ENCODE measurements at regions of chr14 and their contacts with region 1.

Region 1: GRCh38 chr14:102096214-102097114 is 9.6 kb upstream of the HSP90AA1 start:
- DNase-seq: peak; percentile 86
- H3K4me3 Mint-ChIP-seq: no peak overlapping the region
- H3K27ac Mint-ChIP-seq: peak overlapping the region; percentile 6
- H3K4me1 Mint-ChIP-seq: peaks cover 33% of the 10 kb centered on the region
- H3K27me3 Mint-ChIP-seq: no peaks in the 10 kb centered on the region
- CTCF ChIP-seq: peak; percentile 76

Region 2: GRCh38 chr14:101964297-101965144 is 131.9 kb before region 1 on chr14 and contains the start of gene DYNC1H1:
- CTCF ChIA-PET with region 1: no interaction called
- intact Hi-C with region 1: loop called (anchors 2 kb)
- DNase-seq: peak; percentile 93
- H3K4me3 Mint-ChIP-seq: peak within 1 kb of the TSS; percentile 87
- H3K27ac Mint-ChIP-seq: peak within 1 kb of the TSS; percentile 61
- H3K4me1 Mint-ChIP-seq: peaks cover 47% of the 10 kb centered on the region
- H3K27me3 Mint-ChIP-seq: no peaks in the 10 kb centered on the region
- CTCF ChIP-seq: no peak
- total RNA-seq, gene DYNC1H1: 510 and 529 TPM in 2 replicates

Region 3: DNA sequence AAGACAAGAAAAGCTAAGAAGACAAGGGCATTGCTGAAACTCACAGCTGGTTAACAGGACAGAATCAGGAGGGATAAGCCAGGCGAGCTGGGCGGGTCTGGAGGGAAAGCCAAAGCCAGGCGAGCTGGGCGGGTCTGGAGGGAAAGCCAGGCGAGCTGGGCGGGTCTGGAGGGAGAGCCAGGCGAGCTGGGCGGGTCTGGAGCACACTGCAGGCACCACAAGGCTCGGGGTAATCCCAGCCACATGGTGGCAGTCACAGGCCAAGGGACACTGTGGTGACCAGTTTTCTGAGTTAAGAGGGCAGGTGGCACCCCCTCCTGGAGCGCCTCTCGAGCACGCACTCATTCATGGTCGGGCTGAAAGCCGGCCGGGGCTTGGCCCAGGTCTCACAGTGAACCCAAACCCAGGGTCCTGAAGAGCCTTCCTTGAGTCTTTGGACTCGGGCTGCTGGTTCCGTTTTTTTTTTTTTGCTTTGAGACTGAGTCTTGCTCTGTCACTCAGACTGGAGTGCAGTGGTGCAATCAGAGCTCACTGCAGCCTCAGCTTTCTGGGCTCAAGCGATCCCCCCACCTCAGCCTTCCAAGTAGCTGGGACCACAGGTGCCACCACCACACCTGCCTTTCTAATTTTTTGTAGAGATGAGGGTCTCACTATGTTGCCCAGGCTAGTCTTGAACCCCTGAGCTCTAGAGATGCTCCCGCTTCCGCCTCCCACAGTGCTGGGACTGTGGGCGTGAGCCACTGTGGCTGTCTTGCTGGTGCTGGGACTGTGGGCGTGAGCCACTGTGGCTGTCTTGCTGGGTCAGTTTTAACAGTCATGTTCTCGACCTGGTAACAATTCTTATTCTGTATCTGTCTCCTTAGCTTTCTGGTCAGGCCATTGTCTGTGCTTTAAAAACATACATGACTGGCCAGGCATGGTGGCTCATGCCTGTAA is 49.9 kb before region 1 on chr14:
- CTCF ChIA-PET with region 1: interaction called, 9 read pairs
- intact Hi-C with region 1: loop called (anchors 5 kb)
- DNase-seq: peak; percentile 88
- H3K4me3 Mint-ChIP-seq: no peak overlapping the region
- H3K27ac Mint-ChIP-seq: no peak overlapping the region
- H3K4me1 Mint-ChIP-seq: no peaks in the 10 kb centered on the region
- H3K27me3 Mint-ChIP-seq: no peaks in the 10 kb centered on the region
- CTCF ChIP-seq: peak; percentile 22

Region 4: DNA sequence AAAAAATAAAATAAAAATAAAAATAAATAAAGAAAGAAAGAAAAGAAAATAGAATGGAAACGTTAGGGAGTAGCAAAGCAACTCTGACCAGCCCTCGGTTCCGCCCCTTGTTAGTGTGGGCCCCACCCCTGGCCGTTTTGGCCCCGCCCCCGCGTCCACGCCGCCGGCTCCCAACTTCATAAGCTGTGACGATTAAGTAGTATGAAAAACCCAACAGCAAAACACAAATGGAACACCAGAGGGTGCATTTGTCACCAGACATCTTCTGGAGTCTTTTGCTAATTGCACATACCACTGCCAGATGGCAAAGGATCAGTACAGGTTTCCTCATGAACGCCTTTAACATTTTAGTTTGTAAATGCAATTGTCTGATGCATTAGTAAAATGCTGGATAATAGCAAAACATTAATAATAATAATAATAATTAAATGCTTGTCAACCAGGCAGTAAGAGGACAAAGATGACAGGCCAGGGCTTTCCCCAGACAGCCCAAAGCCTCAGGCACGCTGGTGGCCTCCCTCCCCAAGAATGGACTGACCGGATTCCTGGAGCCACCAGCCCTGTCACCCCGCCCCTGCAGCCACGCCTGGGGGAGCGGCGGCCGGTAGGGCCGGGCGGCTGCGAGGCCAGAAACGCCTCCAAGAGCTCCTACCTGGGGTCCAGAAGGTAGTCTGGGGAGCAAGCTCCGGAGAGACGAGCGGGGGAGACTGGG is 33.2 kb before region 1 on chr14:
- CTCF ChIA-PET with region 1: interaction called, 21 read pairs
- intact Hi-C with region 1: loop called (anchors 2 kb)
- DNase-seq: peak; percentile 90
- H3K4me3 Mint-ChIP-seq: peak overlapping the region; percentile 49
- H3K27ac Mint-ChIP-seq: no peak overlapping the region
- H3K4me1 Mint-ChIP-seq: peaks cover 13% of the 10 kb centered on the region
- H3K27me3 Mint-ChIP-seq: no peaks in the 10 kb centered on the region
- CTCF ChIP-seq: peak; percentile 36

Region 5: GRCh38 chr14:102125546-102125945 is 29.1 kb after region 1 on chr14:
- CTCF ChIA-PET with region 1: interaction called, 3 read pairs
- intact Hi-C with region 1: loop called (anchors 2 kb)
- DNase-seq: peak; percentile 14
- H3K4me3 Mint-ChIP-seq: peak overlapping the region; percentile 40
- H3K27ac Mint-ChIP-seq: peak overlapping the region; percentile 65
- H3K4me1 Mint-ChIP-seq: peaks cover 34% of the 10 kb centered on the region
- H3K27me3 Mint-ChIP-seq: no peaks in the 10 kb centered on the region
- CTCF ChIP-seq: no peak